Colonic mucosa (tissue), 4 donors: ENCODE measurements at regions of chr4 and their contacts with region 1.

Region 1: GRCh38 chr4:101730291-101731117 is 60.0 kb upstream of the BANK1 start:
- DNase-seq: peak; percentile 71
- H3K4me3 ChIP-seq: no peak overlapping the region
- H3K27ac ChIP-seq: no peak overlapping the region
- H3K4me1 ChIP-seq: no peaks in the 10 kb centered on the region
- H3K27me3 ChIP-seq: no peaks in the 10 kb centered on the region
- CTCF ChIP-seq: peak; percentile 43

Region 2: DNA sequence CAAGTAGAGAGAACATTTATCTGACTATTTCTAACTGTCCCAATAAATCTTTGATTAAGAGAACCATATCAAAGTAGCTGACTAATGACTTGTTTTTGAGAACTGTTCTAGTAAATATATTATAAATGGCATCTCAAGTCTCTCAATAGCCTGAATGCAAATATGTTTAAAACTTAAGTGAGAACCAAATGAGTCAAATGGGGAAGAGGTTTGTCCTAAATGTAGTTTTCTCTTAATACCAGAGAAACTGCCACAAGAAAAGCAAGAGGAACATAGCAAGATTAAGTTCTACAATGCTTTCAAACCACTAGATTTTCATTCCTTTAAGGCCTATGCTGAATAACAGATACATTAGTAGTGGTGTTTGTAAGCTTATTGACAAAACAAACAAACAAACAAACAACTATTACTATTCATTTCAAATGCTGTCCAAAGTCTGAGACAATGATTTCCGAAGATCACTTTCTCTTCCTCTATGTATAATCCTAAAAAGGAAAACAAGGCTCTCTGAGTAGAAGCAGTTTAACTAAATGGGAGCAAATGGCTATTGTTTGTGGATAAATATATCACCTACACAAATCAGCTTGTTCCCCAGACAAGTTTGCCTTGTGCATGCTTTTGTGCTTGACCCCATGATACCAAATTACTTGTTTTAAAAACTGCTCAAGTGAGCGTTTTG is 804.3 kb before region 1 on chr4:
- intact Hi-C with region 1: loop called (anchors 10 kb)
- DNase-seq: no peak
- H3K4me3 ChIP-seq: no peak overlapping the region
- H3K27ac ChIP-seq: no peak overlapping the region
- H3K4me1 ChIP-seq: no peaks in the 10 kb centered on the region
- H3K27me3 ChIP-seq: no peaks in the 10 kb centered on the region
- CTCF ChIP-seq: no peak